Cardiac septum (tissue), 1 donor: ENCODE measurements at regions of chr3 and their contacts with region 1.

Region 1: DNA sequence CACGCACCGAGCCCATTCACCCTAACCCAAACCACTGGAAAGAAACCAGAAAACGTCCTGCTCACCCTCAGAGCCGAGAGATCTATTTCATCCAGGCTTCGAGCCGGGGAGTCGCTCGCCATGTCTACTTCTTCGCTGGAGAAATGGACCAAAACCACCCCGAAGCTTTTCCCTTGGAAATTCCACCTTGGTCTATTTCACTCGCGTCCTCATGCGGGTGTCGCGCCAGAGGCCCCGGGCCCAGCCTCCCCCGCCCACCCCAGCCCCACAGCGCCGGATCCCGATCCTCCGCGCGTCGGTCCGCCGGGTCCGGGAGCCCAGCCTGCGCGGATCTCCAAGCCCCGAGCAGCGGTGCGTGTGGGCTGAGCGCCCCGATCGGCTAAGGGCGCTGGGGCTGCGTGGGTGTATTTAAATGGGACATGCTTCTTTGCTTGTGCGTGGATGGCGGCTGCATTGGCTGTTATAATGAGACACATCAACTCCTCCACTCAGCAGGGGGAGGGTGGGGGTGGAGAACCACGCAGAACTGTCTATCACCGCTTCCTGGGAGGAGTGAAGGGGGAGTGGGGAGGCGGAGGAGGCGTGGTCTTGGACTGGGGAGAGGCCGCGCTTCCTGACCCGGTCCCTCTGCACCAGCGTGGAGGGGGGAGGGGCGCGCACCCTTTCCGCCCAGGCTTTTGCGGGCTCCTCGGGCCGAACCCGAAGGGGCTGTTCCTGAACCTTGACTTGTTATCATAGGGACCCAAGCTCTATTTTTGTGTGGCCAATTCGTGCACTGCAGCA is at the start of gene TNIK:
- DNase-seq: peak; percentile 96
- total RNA-seq, gene TNIK: 42.2 TPM

Region 2: DNA sequence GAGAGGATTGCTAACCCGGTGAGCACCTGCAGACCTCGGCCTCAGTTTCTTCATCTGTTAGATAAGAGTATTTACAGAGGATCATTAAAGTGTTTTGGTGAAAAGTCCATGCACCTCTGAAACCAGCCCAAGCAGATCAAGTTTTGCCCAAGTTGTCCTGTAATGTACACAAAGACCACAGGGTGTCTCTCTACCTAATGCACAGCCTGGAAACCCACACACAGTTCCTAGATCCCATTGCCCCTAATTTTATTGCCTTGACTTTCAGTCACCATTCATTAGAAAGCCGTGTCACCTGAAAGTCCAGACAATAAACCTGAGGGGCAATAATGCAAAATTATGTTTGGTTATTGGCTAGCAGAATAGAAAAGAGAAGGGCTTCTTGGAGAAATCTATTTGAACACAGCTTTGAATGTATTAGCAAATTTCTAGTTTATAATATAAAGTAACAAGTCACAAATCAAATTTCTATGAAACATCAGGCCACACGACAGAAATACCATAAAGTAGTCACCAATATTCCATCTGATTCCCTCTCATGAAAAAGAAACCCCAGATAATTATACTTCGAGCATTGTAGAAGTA is 272.3 kb before region 1 on chr3:
- intact Hi-C with region 1: loop called (anchors 5 kb)
- DNase-seq: no peak

Region 3: DNA sequence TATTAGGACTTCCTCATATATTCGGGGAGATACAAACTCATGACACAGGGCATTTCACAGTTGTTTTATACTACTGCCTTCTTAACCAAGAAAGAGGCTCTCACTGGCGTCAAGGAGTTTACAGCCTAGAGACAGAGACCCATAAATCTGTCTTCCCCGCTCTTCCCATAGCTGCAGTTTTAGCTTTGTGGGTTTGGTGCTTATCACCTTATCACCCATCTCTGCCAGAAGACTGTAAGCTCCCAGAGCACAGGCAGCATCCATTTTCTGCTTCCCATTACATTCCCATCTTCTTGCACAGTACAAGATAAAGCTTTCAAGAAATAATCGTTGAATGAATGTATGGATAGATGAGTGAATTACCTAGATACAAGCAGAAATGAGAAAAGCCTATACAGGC is 144.2 kb before region 1 on chr3:
- intact Hi-C with region 1: loop called (anchors 1 kb)
- DNase-seq: no peak

Region 4: DNA sequence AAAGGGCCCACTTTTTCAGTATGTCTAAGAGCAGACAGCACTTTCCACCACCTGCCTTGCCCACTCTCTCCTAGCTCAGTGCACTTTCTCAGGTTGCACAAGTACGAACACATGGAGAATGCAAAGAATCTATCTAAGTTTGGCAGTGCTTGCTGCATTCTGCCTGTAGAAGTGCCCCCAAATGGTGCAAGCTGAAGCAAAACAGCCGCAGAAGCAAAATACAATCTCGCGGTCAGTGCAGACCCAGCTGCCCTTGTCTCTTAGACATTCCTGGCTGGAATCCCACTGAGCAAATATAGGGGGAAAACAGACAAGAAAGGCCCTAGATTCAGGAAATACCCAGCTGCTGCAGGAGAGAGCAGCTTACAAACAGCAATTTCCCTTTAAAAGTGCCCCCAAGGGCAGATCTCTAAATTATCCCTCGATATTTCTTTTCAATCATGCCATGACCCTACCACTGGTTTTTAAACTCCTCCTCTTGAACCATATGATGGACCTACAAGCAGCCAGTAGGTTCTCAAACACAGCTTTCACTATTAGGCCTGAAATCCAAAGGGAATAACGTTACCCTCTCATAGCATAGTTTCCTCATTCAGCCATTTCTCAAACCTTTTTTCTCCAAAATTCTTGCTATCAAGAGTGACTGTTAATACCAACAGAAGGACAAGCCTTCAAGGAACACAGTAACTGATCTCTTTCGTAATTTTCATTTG is 66.9 kb before region 1 on chr3:
- intact Hi-C with region 1: loop called (anchors 10 kb)
- DNase-seq: no peak

Region 5: GRCh38 chr3:171561596-171562323 is 101.6 kb after region 1 on chr3:
- intact Hi-C with region 1: loop called (anchors 5 kb)
- DNase-seq: no peak